ENCODE measurements at regions of chr10 and their contacts with region 1.

Region 1: GRCh38 chr10:23994479-23995046 is 214.4 kb upstream of the KIAA1217 start:
- DNase-seq: peak in 40 of 42 donors; percentile 6 to 85 (median 60)

Region 2: DNA sequence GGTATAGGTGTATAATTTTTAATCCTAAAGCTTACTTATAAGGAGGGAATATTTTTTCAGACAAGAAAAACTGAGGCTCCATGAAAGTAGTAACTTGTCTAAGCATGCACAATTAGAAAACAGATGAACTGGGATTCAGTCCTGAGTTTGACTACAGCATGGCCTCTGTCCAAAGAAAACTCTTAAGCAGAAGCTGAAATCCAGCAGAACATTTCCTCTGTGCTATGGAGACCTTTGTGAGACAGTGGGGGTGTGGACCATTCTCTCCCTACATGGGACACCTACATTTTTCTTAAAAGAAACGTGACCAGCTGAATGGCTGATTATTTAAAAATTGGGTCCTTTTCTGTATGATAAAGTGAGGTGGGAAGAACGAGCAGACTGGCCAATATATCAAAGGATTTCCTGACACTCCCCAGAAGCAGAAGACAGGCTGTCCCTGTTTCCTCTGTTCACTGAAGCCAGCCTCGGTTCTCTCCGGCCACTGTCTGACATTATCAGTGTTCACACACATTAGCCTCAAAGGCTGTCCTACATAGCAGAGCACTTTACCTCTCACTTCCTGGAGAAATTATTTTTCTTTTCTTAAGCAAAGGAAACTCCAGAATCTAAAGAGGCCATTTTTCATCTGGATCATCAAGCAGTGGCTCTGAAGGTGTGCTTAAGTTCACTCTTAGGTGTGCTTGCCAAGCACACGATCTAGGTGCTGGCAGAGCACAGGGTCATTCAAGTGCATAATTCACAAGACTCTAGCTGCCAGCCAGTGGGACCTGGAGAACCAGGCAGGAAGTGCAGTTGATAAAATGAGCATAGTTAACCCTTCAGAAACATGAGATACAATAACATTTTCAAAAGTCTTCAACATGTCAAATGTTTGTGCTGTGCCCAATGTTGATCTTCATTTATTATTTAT is 174.0 kb after region 1 on chr10:
- intact Hi-C with region 1: no loop called
- DNase-seq: no peak

Region 3: DNA sequence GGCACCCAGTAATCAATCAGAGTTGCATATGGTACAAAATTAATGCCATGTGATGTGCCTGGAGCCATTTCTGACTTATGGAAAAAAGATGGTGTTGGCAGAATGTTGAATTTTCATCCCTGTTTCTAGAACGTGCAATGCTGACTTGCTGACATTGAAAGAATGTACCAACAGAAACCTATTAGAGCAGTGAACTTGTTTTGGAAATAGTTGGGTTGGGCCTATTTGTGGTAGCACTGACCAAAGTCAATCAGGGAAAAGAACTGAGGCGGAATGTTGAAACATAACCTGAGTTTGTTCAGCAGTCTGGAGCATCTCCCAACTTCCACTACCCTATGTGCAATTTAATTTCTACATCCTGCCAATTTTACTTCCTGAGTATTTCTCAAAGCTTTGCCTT is 202.7 kb after region 1 on chr10:
- intact Hi-C with region 1: loop called (anchors 10 kb)
- DNase-seq: no peak